AG04450 (cell line): ENCODE measurements at regions of chr12 and their contacts with region 1.

Region 1: GRCh38 chr12:49088190-49088931 is 6.2 kb downstream of the DHH start:
- DNase-seq: peak; percentile 88
- H3K4me3 ChIP-seq: 0 out of 2 replicates have a peak overlapping the region, but pooled peaks have one; percentile 29
- H3K27ac ChIP-seq: no peak overlapping the region
- H3K27me3 ChIP-seq: peaks cover 15% of the 10 kb centered on the region
- CTCF ChIP-seq: peak; percentile 89

Region 2: GRCh38 chr12:49105608-49106007 is 17.2 kb after region 1 on chr12:
- CTCF ChIA-PET with region 1: interaction called, 125 read pairs
- POLR2A ChIA-PET with region 1: no interaction called
- DNase-seq: no peak
- H3K4me3 ChIP-seq: no peak overlapping the region
- H3K27ac ChIP-seq: no peak overlapping the region
- H3K27me3 ChIP-seq: no peaks in the 10 kb centered on the region
- CTCF ChIP-seq: no peak

Region 3: GRCh38 chr12:49121047-49121696 is 32.8 kb after region 1 on chr12:
- CTCF ChIA-PET with region 1: interaction called, 33 read pairs
- POLR2A ChIA-PET with region 1: no interaction called
- DNase-seq: no peak
- H3K4me3 ChIP-seq: no peak overlapping the region
- H3K27ac ChIP-seq: no peak overlapping the region
- H3K27me3 ChIP-seq: no peaks in the 10 kb centered on the region
- CTCF ChIP-seq: peak; percentile 76

Region 4: GRCh38 chr12:49232940-49233841 is 144.8 kb after region 1 on chr12:
- CTCF ChIA-PET with region 1: interaction called, 27 read pairs
- POLR2A ChIA-PET with region 1: interaction called, 19 read pairs
- DNase-seq: no peak
- H3K4me3 ChIP-seq: peak overlapping the region; percentile 46
- H3K27ac ChIP-seq: peak overlapping the region; percentile 82
- H3K27me3 ChIP-seq: no peaks in the 10 kb centered on the region
- CTCF ChIP-seq: peak; percentile 40

Region 5: GRCh38 chr12:49462083-49462744 is 373.9 kb after region 1 on chr12:
- CTCF ChIA-PET with region 1: no interaction called
- POLR2A ChIA-PET with region 1: no interaction called
- DNase-seq: no peak
- H3K4me3 ChIP-seq: no peak overlapping the region
- H3K27ac ChIP-seq: no peak overlapping the region
- H3K27me3 ChIP-seq: no peaks in the 10 kb centered on the region
- CTCF ChIP-seq: no peak